ENCODE measurements at regions of chr17 and their contacts with region 1.

Region 1: GRCh38 chr17:4412933-4413831 is 20.6 kb upstream of the SPNS3 start:
- DNase-seq: peak; percentile 84
- ATAC-seq: peak; percentile 98
- H3K4me3 ChIP-seq: no peak overlapping the region
- H3K27ac ChIP-seq: no peak overlapping the region
- H3K4me1 ChIP-seq: no peaks in the 10 kb centered on the region
- H3K27me3 ChIP-seq: 0 out of 2 replicates have a peak, but pooled peaks cover 3% of the 10 kb centered on the region
- CTCF ChIP-seq: peak; percentile 98
- POLR2A ChIP-seq: peak; percentile 54
- RAD21 ChIP-seq: peak; percentile 99

Region 2: DNA sequence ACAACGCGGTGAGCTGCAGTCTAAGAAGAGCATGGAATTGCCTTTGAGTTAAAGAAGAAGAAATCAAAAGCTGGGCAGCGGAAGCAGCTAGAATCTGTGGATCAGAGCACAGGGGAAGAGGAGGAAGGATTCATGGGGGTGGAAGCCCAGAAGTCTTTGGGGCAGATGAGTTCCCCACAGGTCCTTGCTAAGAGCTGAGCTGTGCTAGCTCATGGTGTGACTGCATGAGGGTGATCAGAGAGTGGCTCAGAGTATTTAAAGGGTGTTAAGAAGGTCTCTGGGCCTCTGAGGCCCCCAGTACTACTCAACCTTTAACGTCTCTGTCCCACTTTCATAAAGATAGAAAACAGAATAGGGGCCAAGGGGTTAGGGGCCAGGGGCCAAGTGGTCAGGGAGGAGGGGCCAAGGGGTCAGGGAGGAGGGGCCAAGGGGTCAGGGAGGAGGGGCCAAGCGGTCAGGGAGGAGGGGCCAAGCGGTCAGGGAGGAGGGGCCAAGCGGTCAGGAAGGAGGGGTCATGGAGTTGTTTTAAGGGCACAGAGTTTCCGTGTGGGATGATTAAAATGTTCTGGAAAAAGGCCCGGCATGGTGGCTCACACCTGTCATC is 843.5 kb before region 1 on chr17:
- CTCF ChIA-PET with region 1: no interaction called
- POLR2A ChIA-PET with region 1: no interaction called
- dilution Hi-C with region 1: no loop called
- in situ Hi-C with region 1: no loop called
- intact Hi-C with region 1: no loop called
- DNase-seq: no peak
- ATAC-seq: no peak
- H3K4me3 ChIP-seq: no peak overlapping the region
- H3K27ac ChIP-seq: no peak overlapping the region
- H3K4me1 ChIP-seq: no peaks in the 10 kb centered on the region
- H3K27me3 ChIP-seq: no peaks in the 10 kb centered on the region
- CTCF ChIP-seq: no peak
- POLR2A ChIP-seq: no peak
- RAD21 ChIP-seq: no peak

Region 3: GRCh38 chr17:4199818-4200402 is 213.3 kb before region 1 on chr17:
- CTCF ChIA-PET with region 1: interaction called, 7 read pairs
- POLR2A ChIA-PET with region 1: no interaction called
- dilution Hi-C with region 1: no loop called
- in situ Hi-C with region 1: loop called (anchors 5 kb)
- intact Hi-C with region 1: loop called (anchors 1 kb)
- DNase-seq: peak; percentile 42
- ATAC-seq: no peak
- H3K4me3 ChIP-seq: no peak overlapping the region
- H3K27ac ChIP-seq: no peak overlapping the region
- H3K4me1 ChIP-seq: peaks cover 9% of the 10 kb centered on the region
- H3K27me3 ChIP-seq: no peaks in the 10 kb centered on the region
- CTCF ChIP-seq: peak; percentile 71
- POLR2A ChIP-seq: no peak
- RAD21 ChIP-seq: peak; percentile 59

Region 4: GRCh38 chr17:4476017-4476416 is 62.8 kb after region 1 on chr17:
- CTCF ChIA-PET with region 1: no interaction called
- POLR2A ChIA-PET with region 1: no interaction called
- dilution Hi-C with region 1: no loop called
- in situ Hi-C with region 1: no loop called
- intact Hi-C with region 1: no loop called
- DNase-seq: no peak
- ATAC-seq: no peak
- H3K4me3 ChIP-seq: no peak overlapping the region
- H3K27ac ChIP-seq: no peak overlapping the region
- H3K4me1 ChIP-seq: no peaks in the 10 kb centered on the region
- H3K27me3 ChIP-seq: peaks cover 41% of the 10 kb centered on the region
- CTCF ChIP-seq: no peak
- POLR2A ChIP-seq: no peak
- RAD21 ChIP-seq: no peak

Region 5: GRCh38 chr17:4623249-4623648 is 210.1 kb after region 1 on chr17:
- CTCF ChIA-PET with region 1: no interaction called
- POLR2A ChIA-PET with region 1: no interaction called
- dilution Hi-C with region 1: no loop called
- in situ Hi-C with region 1: no loop called
- intact Hi-C with region 1: no loop called
- DNase-seq: peak; percentile 71
- ATAC-seq: peak; percentile 74
- H3K4me3 ChIP-seq: no peak overlapping the region
- H3K27ac ChIP-seq: no peak overlapping the region
- H3K4me1 ChIP-seq: no peaks in the 10 kb centered on the region; the same call in 1 of the 2 replicates
- H3K27me3 ChIP-seq: peaks cover 13% of the 10 kb centered on the region
- CTCF ChIP-seq: no peak
- POLR2A ChIP-seq: no peak
- RAD21 ChIP-seq: no peak